ENCODE measurements at regions of chr6 and their contacts with region 1.

Region 1: DNA sequence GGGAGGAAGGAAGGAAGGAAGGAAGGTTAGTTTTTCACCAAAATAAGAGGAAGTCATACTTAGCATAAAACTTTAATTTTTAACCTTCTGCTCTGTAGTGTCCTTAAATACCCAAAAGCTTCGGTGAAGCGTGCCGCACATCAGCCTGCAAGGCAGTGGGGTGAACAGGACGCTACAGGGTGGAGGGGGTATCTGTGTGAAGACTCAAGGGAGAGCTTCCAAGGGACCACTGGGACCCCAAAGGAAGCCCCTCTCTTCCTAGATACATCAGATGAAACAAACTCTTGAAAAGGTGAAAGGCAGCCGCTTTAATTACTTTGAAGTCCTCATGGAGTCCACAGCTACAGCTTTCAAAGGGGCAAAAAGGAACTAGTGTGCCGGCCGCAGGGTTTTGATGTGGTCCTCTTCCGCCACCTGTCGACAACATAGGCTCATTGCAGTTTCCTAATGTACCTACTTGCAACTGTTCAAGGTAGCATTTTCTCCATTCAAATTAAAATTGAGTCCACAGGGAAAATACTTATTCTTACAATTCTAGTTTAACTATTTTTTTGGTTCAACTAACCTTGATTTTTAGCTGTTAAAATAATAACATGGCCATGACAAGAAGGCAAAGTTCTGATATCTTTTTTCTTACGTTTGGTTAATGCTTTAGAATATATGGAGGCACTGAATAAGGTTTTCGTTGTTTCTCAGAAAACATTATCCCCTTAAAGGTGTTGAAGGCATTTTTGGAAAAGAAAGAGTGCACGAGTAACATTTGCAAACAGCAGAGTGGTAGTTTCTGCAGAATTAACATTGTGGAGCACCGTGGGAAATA is 135.0 kb upstream of the RIPOR2 start:
- DNase-seq: peak; percentile 91
- H3K4me3 Mint-ChIP-seq: peak overlapping the region; percentile 38
- H3K27ac Mint-ChIP-seq: peak overlapping the region; percentile 70
- H3K4me1 Mint-ChIP-seq: peaks cover 10% of the 10 kb centered on the region
- H3K27me3 Mint-ChIP-seq: no peaks in the 10 kb centered on the region

Region 2: GRCh38 chr6:25035527-25036435 is 35.0 kb before region 1 on chr6:
- CTCF ChIA-PET with region 1: interaction called, 17 read pairs
- intact Hi-C with region 1: no loop called
- DNase-seq: no peak
- H3K4me3 Mint-ChIP-seq: peak overlapping the region; percentile 78
- H3K27ac Mint-ChIP-seq: peak overlapping the region; percentile 85
- H3K4me1 Mint-ChIP-seq: peaks cover 53% of the 10 kb centered on the region
- H3K27me3 Mint-ChIP-seq: no peaks in the 10 kb centered on the region

Measured in activated naive CD4-positive, alpha-beta T cell treated with anti-CD3 and anti-CD28 coated beads for 36 hours (primary cell).